ENCODE measurements at regions of chr5 and their contacts with region 1.

Region 1: GRCh38 chr5:148957591-148958202 is 105.2 kb downstream of the SH3TC2 start:
- DNase-seq: peak; percentile 33
- H3K4me3 ChIP-seq: no peak overlapping the region
- H3K27ac ChIP-seq: peak overlapping the region; percentile 73
- H3K4me1 ChIP-seq: peaks cover 18% of the 10 kb centered on the region
- H3K27me3 ChIP-seq: no peaks in the 10 kb centered on the region
- CTCF ChIP-seq: peak; percentile 90

Region 2: DNA sequence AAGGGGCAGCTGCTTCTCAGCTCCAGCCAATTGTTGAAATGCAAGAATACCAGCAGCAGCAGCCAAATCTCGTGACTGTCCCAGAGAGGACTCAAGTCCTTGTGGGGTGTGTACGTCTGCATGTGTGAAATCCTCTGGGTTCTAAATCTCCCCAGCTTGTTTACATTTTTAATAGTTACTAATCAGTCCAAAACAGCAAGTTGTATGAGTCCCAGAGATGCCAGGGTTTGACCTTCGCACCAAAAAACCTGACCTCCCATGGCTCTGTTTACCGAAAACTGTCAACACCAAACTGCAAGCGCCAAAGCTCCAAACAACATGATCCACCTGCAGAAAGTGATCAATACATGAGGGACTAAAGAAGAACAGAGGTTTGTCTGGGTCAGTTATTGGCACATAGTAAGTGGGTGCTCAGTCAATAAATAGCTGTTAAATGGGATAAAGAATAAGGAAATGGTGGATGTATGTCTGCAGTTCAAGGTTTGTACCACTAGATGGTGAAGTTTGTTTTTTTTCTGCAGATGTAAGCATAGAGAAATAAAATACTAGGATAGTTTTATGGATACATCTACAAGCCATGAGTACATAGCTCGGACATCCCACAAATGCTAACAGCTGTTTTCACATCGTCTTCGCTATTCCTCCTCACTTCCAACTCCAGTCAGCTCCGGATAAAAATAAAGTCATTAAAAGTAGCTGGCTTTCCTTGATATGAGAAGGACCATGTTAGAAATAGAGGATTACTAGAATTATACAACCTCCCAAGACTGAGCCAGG is 216.5 kb before region 1 on chr5:
- CTCF ChIA-PET with region 1: interaction called, 3 read pairs
- dilution Hi-C with region 1: no loop called
- in situ Hi-C with region 1: no loop called
- intact Hi-C with region 1: loop called (anchors 1 kb)
- DNase-seq: peak; percentile 58
- H3K4me3 ChIP-seq: no peak overlapping the region
- H3K27ac ChIP-seq: no peak overlapping the region
- H3K4me1 ChIP-seq: no peaks in the 10 kb centered on the region
- H3K27me3 ChIP-seq: no peaks in the 10 kb centered on the region
- CTCF ChIP-seq: peak; percentile 66 to 77

Region 3: DNA sequence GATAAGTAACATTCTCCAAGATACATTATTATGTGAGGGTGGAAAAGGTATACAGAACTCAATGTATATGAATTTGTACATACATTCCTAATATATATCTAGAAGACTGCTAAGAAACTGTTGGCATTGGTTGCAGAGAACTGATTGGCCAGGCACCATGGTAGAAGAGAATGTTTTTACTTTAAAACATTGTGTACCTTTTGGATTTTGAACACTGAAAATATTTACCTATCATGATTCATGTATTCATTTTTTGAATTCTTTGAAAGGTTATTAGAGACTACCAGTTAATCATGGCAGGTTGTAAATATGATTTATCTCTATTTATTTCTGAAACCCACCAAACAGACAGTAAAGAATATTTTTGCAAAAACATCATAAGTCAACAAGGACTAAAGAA is 172.5 kb before region 1 on chr5:
- CTCF ChIA-PET with region 1: no interaction called
- dilution Hi-C with region 1: no loop called
- in situ Hi-C with region 1: no loop called
- intact Hi-C with region 1: no loop called
- DNase-seq: no peak
- H3K4me3 ChIP-seq: no peak overlapping the region
- H3K27ac ChIP-seq: no peak overlapping the region
- H3K4me1 ChIP-seq: peaks cover 21% of the 10 kb centered on the region
- H3K27me3 ChIP-seq: no peaks in the 10 kb centered on the region
- CTCF ChIP-seq: no peak

Region 4: GRCh38 chr5:148820461-148821395 is 137.0 kb before region 1 on chr5:
- CTCF ChIA-PET with region 1: interaction called, 4 read pairs
- dilution Hi-C with region 1: no loop called
- in situ Hi-C with region 1: no loop called
- intact Hi-C with region 1: loop called (anchors 1 kb)
- DNase-seq: peak; percentile 37
- H3K4me3 ChIP-seq: no peak overlapping the region
- H3K27ac ChIP-seq: no peak overlapping the region
- H3K4me1 ChIP-seq: peaks cover 11% of the 10 kb centered on the region
- H3K27me3 ChIP-seq: no peaks in the 10 kb centered on the region
- CTCF ChIP-seq: peak; percentile 71 to 75

Region 5: GRCh38 chr5:148831590-148832565 is 125.8 kb before region 1 on chr5:
- CTCF ChIA-PET with region 1: no interaction called
- dilution Hi-C with region 1: no loop called
- in situ Hi-C with region 1: no loop called
- intact Hi-C with region 1: no loop called
- DNase-seq: no peak
- H3K4me3 ChIP-seq: peak overlapping the region in 1 of 3 experiments; percentile 81
- H3K27ac ChIP-seq: no peak overlapping the region
- H3K4me1 ChIP-seq: peaks cover 27% of the 10 kb centered on the region
- H3K27me3 ChIP-seq: no peaks in the 10 kb centered on the region
- CTCF ChIP-seq: no peak

Region 6: GRCh38 chr5:148984333-148984732 is 26.6 kb after region 1 on chr5:
- CTCF ChIA-PET with region 1: interaction called, 3 read pairs
- dilution Hi-C with region 1: no loop called
- in situ Hi-C with region 1: no loop called
- intact Hi-C with region 1: loop called (anchors 1 kb)
- DNase-seq: peak; percentile 94
- H3K4me3 ChIP-seq: no peak overlapping the region
- H3K27ac ChIP-seq: peak overlapping the region; percentile 100
- H3K4me1 ChIP-seq: peaks cover 51% of the 10 kb centered on the region
- H3K27me3 ChIP-seq: no peaks in the 10 kb centered on the region
- CTCF ChIP-seq: no peak

Region 7: GRCh38 chr5:149035372-149035790 is 77.7 kb after region 1 on chr5:
- CTCF ChIA-PET with region 1: no interaction called
- dilution Hi-C with region 1: no loop called
- in situ Hi-C with region 1: no loop called
- intact Hi-C with region 1: loop called (anchors 1 kb)
- DNase-seq: peak; percentile 61
- H3K4me3 ChIP-seq: no peak overlapping the region
- H3K27ac ChIP-seq: no peak overlapping the region
- H3K4me1 ChIP-seq: peaks cover 25% of the 10 kb centered on the region
- H3K27me3 ChIP-seq: no peaks in the 10 kb centered on the region
- CTCF ChIP-seq: peak; percentile 88 to 90

Region 8: GRCh38 chr5:149172261-149172660 is 214.6 kb after region 1 on chr5:
- CTCF ChIA-PET with region 1: no interaction called
- dilution Hi-C with region 1: no loop called
- in situ Hi-C with region 1: no loop called
- intact Hi-C with region 1: no loop called
- DNase-seq: peak; percentile 76
- H3K4me3 ChIP-seq: no peak overlapping the region
- H3K27ac ChIP-seq: no peak overlapping the region
- H3K4me1 ChIP-seq: peaks cover 31% of the 10 kb centered on the region
- H3K27me3 ChIP-seq: no peaks in the 10 kb centered on the region
- CTCF ChIP-seq: no peak